ENCODE measurements at regions of chr15 and their contacts with region 1.

Region 1: GRCh38 chr15:80455668-80456442 is 51.7 kb downstream of the ARNT2 start:
- DNase-seq: no peak

Region 2: GRCh38 chr15:78574944-78575343 is 1880.9 kb before region 1 on chr15:
- intact Hi-C with region 1: loop called in 1 of 2 experiments (anchors 10 kb)
- DNase-seq: no peak

Region 3: GRCh38 chr15:80567721-80568157 is 111.9 kb after region 1 on chr15:
- intact Hi-C with region 1: loop called (anchors 5 to 10 kb)
- DNase-seq: no peak